ENCODE measurements at regions of chr1 and their contacts with region 1.

Region 1: DNA sequence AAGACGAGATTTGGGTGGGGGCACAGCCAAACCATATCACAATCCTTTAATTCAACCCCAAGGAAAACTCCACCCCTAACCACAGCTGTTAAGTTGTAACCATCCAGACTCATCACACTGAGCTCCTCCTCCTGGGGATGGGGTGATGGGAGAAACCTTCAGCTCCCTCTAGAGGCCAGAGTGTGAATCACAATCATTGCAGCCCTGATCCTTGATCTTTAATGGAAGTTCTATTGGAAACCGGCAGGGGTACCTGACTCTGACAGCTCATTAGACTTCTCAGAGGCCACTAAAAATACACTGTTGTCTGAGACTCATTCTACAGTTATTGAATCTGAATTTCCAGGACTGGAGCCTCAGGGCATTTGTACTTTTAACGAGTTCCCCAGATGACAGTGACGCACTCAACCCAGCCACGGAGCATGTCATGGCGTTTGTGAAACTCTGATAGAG is 127.2 kb downstream of the IGSF21 start:
- DNase-seq: no peak

Region 2: DNA sequence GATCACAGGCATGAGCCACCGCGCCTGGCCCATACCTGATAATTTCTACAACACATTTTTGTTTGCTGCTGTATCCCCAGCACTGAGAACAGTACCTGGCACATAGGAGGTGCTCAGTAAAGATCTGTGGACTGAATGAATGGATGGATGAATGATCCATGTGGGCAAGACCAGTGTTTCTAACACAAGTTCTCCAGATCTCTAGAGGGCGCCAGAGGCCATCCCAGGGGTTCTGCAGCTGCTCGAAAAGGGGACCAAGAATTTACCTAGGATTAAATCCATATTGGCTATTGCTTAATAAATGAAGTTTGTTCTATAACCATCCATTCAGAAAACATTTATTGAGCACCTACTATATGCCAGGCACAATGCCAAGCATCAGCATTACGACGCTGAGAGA is 312.0 kb before region 1 on chr1:
- intact Hi-C with region 1: loop called (anchors 10 kb)
- DNase-seq: no peak

Region 3: DNA sequence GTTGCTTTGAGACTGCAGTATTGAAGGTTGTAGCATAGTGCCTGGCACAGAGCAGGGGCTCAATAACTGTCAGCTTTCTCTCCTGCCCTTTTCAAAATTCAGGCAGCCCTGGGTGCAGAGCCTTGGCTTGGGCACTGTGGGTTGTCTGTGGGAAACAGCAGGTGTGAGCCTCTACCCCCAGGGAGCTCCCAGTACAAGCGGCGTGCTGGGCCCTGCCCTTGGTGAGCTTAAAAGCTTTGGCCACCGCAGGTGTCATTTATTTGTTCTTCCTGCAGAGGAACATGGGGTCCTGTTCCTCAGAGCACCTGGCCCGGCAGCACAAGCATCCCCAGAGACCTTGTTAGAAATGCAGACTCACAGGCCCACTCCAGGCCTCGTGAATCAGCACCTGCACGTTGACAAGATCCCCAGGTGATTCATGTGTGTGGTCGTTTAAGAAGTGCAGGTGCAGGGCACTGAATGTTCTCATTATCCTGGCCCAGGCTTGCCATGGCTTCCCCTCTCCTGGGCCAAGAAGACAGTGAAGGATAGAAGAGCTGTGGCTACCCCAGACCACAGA is 157.1 kb before region 1 on chr1:
- intact Hi-C with region 1: no loop called
- DNase-seq: no peak

Region 4: GRCh38 chr1:18271336-18271735 is 36.5 kb after region 1 on chr1:
- intact Hi-C with region 1: no loop called
- DNase-seq: no peak